Aorta (tissue), 5 donors: ENCODE measurements at regions of chr1 and their contacts with region 1.

Region 1: DNA sequence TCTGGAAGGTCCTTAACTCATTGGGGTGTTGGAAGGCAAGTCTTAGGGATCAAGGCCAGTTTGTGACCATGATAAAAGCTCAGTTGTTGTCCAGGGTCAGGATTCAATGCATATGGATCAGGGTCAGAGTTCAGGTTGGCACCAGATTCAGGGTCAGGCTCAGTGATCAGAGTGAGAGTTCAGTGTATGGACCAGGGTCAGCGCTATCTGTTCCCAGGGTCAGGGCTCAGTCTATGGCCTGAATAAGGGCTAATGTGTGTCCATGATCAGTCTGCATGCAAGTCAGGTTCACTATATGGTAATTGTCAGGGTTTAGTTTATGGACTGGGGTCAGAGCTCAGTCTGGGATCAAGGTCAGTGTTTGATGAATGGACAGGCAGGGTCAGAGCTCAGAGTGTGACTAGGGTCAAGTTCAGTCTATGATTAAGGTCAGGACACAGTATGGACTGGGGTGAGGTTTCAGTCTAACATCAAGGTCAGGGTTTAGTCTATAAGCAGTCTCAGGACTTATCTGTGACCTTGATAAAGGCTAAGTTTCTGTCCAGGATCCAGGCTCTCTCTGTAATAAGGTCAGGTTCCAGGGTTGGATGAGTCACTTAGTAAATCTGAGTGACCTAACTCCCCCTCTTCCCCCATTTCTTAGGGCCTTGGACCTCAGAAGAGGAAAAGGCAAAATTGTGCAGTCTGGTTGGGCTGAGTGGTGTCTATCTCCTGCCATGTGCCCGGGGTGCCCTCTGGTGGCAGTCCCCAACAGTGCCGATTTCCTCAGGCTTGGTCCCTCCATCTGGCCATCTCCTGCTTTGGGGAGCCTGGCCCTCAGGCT is 23.8 kb downstream of the KNCN start:
- DNase-seq: peak; percentile 88 to 92
- ATAC-seq: peak; percentile 86
- H3K4me3 ChIP-seq: no peak overlapping the region
- H3K27ac ChIP-seq: no peak overlapping the region
- H3K4me1 ChIP-seq: no peaks in the 10 kb centered on the region
- H3K27me3 ChIP-seq: no peaks in the 10 kb centered on the region

Region 2: GRCh38 chr1:46406881-46407608 is 120.6 kb before region 1 on chr1:
- intact Hi-C with region 1: loop called (anchors 2 kb)
- DNase-seq: peak; percentile 27 to 48
- ATAC-seq: no peak
- H3K4me3 ChIP-seq: no peak overlapping the region
- H3K27ac ChIP-seq: no peak overlapping the region
- H3K4me1 ChIP-seq: no peaks in the 10 kb centered on the region
- H3K27me3 ChIP-seq: no peaks in the 10 kb centered on the region

Region 3: DNA sequence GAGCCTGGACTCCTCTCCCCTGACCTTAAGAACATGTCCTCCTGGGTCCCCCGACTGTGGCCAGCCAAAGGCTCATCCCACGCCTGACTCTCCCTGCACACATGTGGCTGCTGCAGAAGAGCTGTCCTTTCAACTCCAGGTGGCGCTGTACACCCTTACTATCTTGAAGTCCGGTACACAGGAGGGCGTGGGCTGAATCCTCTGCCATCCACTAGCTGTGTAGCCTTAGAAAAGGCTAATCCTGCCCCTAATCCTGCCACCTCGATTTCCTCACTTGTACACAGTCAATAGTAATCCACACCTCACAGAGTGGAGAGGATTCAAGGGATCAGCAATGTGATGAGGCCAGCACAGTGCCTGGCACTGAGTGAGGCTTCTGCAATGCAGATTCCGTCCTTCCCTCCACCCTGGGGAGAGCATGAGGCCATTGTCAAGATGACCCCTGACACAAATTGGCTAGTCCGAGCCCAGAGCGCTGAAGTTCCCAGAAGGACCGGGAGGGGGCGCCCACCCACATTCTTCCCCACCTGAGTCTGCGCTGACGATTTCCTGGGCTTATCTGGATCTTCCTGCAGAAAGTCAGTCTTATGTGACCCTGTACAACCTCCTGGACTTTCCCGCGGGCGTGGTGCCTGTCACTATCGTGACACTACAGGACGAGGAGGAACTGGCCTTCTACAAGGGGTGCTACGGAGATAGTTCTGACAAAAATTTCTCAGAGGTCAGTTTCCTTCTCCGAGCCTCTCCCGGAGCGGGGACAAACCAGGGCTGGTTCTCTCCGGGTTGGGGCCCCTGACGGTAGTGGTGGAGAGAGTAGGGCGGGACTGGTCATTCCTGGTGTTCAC is 85.1 kb before region 1 on chr1:
- intact Hi-C with region 1: loop called (anchors 1 to 2 kb)
- DNase-seq: peak; percentile 77 to 92
- ATAC-seq: peak; percentile 85
- H3K4me3 ChIP-seq: no peak overlapping the region
- H3K27ac ChIP-seq: no peak overlapping the region
- H3K4me1 ChIP-seq: no peaks in the 10 kb centered on the region
- H3K27me3 ChIP-seq: no peaks in the 10 kb centered on the region

Region 4: GRCh38 chr1:46477153-46477929 is 50.3 kb before region 1 on chr1:
- intact Hi-C with region 1: loop called (anchors 1 to 2 kb)
- DNase-seq: peak; percentile 75 to 91
- ATAC-seq: peak; percentile 80
- H3K4me3 ChIP-seq: no peak overlapping the region
- H3K27ac ChIP-seq: no peak overlapping the region
- H3K4me1 ChIP-seq: no peaks in the 10 kb centered on the region
- H3K27me3 ChIP-seq: no peaks in the 10 kb centered on the region

Region 5: GRCh38 chr1:46691997-46692790 is 164.5 kb after region 1 on chr1:
- intact Hi-C with region 1: no loop called
- DNase-seq: no peak
- ATAC-seq: no peak
- H3K4me3 ChIP-seq: no peak overlapping the region
- H3K27ac ChIP-seq: no peak overlapping the region
- H3K4me1 ChIP-seq: no peaks in the 10 kb centered on the region
- H3K27me3 ChIP-seq: no peaks in the 10 kb centered on the region

Region 6: GRCh38 chr1:46724991-46725735 is 197.5 kb after region 1 on chr1:
- intact Hi-C with region 1: loop called (anchors 2 to 5 kb)
- DNase-seq: peak; percentile 73 to 80
- ATAC-seq: peak; percentile 94
- H3K4me3 ChIP-seq: no peak overlapping the region
- H3K27ac ChIP-seq: no peak overlapping the region
- H3K4me1 ChIP-seq: no peaks in the 10 kb centered on the region
- H3K27me3 ChIP-seq: no peaks in the 10 kb centered on the region